MCF 10A (cell line): ENCODE measurements at regions of chr6 and their contacts with region 1.

Region 1: GRCh38 chr6:160041608-160042007 is 72.7 kb downstream of the IGF2R start:
- DNase-seq: peak; percentile 97
- H3K4me3 Mint-ChIP-seq: peak overlapping the region; percentile 77
- H3K27ac Mint-ChIP-seq: peak overlapping the region; percentile 66
- H3K4me1 Mint-ChIP-seq: peaks cover 58% of the 10 kb centered on the region
- H3K27me3 Mint-ChIP-seq: no peaks in the 10 kb centered on the region
- CTCF ChIP-seq: peak; percentile 34

Region 2: GRCh38 chr6:159968440-159969203 is 73.0 kb before region 1 on chr6 and contains the start of gene IGF2R:
- CTCF ChIA-PET with region 1: interaction called, 6 read pairs
- POLR2A ChIA-PET with region 1: interaction called, 92 read pairs
- intact Hi-C with region 1: loop called (anchors 1 kb)
- DNase-seq: peak; percentile 92
- H3K4me3 Mint-ChIP-seq: peak within 1 kb of the TSS; percentile 79
- H3K27ac Mint-ChIP-seq: peak within 1 kb of the TSS; percentile 67
- H3K4me1 Mint-ChIP-seq: peaks cover 34% of the 10 kb centered on the region
- H3K27me3 Mint-ChIP-seq: no peaks in the 10 kb centered on the region
- CTCF ChIP-seq: peak; percentile 13
- total RNA-seq, gene IGF2R: 160 and 234 TPM in 2 replicates

Region 3: GRCh38 chr6:159973951-159974350 is 67.7 kb before region 1 on chr6:
- CTCF ChIA-PET with region 1: interaction called, 7 read pairs
- POLR2A ChIA-PET with region 1: interaction called, 92 read pairs
- intact Hi-C with region 1: loop called (anchors 1 kb)
- DNase-seq: peak; percentile 80
- H3K4me3 Mint-ChIP-seq: no peak overlapping the region
- H3K27ac Mint-ChIP-seq: peak overlapping the region; percentile 75
- H3K4me1 Mint-ChIP-seq: peaks cover 62% of the 10 kb centered on the region
- H3K27me3 Mint-ChIP-seq: no peaks in the 10 kb centered on the region
- CTCF ChIP-seq: no peak

Region 4: DNA sequence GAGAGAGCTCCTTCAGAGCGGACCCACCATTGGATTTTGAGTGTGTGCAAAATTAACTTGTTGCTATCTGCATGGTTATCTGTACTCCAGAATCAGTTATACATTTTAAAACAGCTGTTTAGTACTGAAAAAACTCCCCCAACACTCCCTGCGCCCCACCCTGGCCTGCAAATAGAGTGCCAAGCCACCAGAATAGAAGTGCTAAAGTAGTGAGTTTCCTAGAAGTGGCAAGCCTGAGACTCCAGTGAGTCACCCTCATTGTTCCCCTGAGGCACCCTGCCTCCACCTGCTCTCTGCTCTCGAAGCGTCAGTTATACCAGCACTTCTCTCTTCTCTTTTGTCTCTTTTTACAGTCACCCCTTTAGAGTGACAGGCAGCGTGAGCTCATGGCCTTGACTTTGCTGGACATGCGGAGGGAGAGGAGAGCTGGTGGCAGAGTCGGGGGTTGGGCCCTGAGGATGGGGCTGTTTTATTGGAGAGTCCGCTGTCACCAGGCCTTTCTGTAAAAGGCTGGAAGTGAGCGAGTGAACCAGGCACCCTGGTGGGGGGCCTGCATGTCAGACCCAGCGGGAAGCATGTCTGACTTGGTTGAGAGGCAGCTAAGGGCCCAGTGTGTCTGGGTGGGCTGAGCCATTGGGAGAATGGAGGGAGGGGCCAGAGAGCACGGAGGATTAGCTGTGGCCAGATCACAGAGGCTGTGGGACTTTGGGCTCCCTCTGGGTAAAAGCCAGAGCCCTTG is 62.3 kb before region 1 on chr6:
- CTCF ChIA-PET with region 1: interaction called, 7 read pairs
- POLR2A ChIA-PET with region 1: interaction called, 15 read pairs
- intact Hi-C with region 1: no loop called
- DNase-seq: peak; percentile 84
- H3K4me3 Mint-ChIP-seq: peak overlapping the region; percentile 17
- H3K27ac Mint-ChIP-seq: peak overlapping the region; percentile 47
- H3K4me1 Mint-ChIP-seq: peaks cover 75% of the 10 kb centered on the region
- H3K27me3 Mint-ChIP-seq: no peaks in the 10 kb centered on the region
- CTCF ChIP-seq: no peak

Region 5: GRCh38 chr6:160030103-160030502 is 11.5 kb before region 1 on chr6:
- CTCF ChIA-PET with region 1: interaction called, 12 read pairs
- POLR2A ChIA-PET with region 1: interaction called, 34 read pairs
- intact Hi-C with region 1: no loop called
- DNase-seq: peak; percentile 92
- H3K4me3 Mint-ChIP-seq: peak overlapping the region; percentile 63
- H3K27ac Mint-ChIP-seq: peak overlapping the region; percentile 95
- H3K4me1 Mint-ChIP-seq: peaks cover 38% of the 10 kb centered on the region
- H3K27me3 Mint-ChIP-seq: no peaks in the 10 kb centered on the region
- CTCF ChIP-seq: no peak

Region 6: GRCh38 chr6:160202411-160202810 is 160.8 kb after region 1 on chr6:
- CTCF ChIA-PET with region 1: no interaction called
- POLR2A ChIA-PET with region 1: no interaction called
- intact Hi-C with region 1: no loop called
- DNase-seq: peak; percentile 35
- H3K4me3 Mint-ChIP-seq: no peak overlapping the region
- H3K27ac Mint-ChIP-seq: no peak overlapping the region
- H3K4me1 Mint-ChIP-seq: peaks cover 5% of the 10 kb centered on the region
- H3K27me3 Mint-ChIP-seq: no peaks in the 10 kb centered on the region
- CTCF ChIP-seq: no peak

Region 7: GRCh38 chr6:160279850-160280249 is 238.2 kb after region 1 on chr6:
- CTCF ChIA-PET with region 1: no interaction called
- POLR2A ChIA-PET with region 1: no interaction called
- intact Hi-C with region 1: no loop called
- DNase-seq: peak; percentile 38
- H3K4me3 Mint-ChIP-seq: no peak overlapping the region
- H3K27ac Mint-ChIP-seq: no peak overlapping the region
- H3K4me1 Mint-ChIP-seq: peaks cover 11% of the 10 kb centered on the region
- H3K27me3 Mint-ChIP-seq: no peaks in the 10 kb centered on the region
- CTCF ChIP-seq: no peak